ENCODE measurements at regions of chr1 and their contacts with region 1.

Region 1: GRCh38 chr1:15538770-15539169 is 12.1 kb downstream of the DNAJC16 start:
- DNase-seq: no peak
- H3K4me3 ChIP-seq: no peak overlapping the region
- H3K27ac ChIP-seq: no peak overlapping the region
- H3K4me1 ChIP-seq: no peaks in the 10 kb centered on the region
- H3K27me3 ChIP-seq: no peaks in the 10 kb centered on the region
- CTCF ChIP-seq: no peak
- EP300 ChIP-seq: no peak
- POLR2A ChIP-seq: no peak

Region 2: DNA sequence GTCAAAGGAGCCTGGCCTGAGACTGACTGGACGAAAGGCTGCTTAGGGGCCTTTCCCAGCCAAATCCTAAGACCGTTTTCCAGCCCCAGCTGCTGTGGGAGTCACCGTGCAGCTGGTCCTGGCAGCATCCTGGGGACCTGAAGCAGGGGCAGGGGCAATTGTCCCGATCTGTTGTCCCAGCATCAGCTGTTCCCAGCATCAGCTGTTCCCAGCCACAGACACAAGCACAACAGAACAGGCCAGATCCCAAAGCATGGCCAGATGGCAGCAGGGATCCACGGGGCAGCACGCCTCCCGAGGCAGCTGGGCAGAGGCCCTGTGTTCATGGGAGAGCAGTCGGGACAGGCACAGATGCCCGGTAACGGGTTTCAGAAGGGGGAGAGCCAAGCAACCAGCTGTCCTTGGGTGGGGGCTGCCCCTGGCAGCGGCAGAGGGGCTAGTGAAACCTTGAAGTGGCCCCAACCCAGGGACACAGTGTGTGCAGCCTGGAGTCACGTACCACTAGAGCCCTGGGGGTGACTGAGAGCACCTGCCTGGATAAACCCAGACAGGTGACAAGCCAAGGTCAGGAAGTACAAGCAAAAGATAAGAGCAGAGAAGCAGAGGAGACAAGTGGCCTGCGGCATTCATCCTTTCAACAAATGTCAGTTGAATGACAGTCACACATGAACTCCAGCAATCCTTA is 49.6 kb before region 1 on chr1:
- intact Hi-C with region 1: no loop called
- DNase-seq: no peak
- H3K4me3 ChIP-seq: no peak overlapping the region
- H3K27ac ChIP-seq: no peak overlapping the region
- H3K4me1 ChIP-seq: no peaks in the 10 kb centered on the region
- H3K27me3 ChIP-seq: no peaks in the 10 kb centered on the region
- CTCF ChIP-seq: no peak
- EP300 ChIP-seq: no peak
- POLR2A ChIP-seq: no peak

Region 3: DNA sequence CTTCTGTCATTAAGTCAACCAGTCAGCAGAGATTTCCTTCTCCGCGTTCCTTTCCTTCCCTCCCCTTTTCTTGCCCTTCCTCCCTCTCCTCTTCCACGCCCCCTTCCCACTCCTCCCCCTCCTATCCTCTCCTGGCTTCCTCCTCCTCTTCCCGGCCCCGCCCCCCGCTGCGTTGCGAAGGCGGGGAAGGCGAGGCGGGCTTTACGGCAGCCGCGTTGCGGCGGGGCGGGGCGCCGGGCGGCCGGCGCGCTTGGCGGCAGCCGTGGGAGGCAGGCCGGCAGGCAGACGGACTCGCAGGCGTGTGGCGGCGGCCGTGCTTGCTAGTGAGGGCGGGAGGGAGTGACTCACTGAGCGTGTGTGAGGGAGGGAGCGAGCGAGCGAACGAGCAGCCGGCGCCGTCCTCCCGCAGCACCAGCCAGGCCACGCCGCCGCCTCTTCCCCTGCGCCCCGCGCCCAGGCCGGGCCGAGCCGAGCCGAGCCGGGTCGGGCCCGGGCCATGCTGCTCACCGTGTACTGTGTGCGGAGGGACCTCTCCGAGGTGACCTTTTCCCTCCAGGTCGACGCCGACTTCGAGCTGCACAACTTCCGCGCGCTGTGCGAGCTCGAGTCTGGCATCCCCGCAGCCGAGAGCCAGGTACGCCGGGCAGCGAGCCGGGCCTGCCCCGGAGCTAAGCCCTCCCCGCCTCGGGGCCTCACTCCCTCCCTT is 78.6 kb after region 1 on chr1 and contains the start of gene DDI2:
- intact Hi-C with region 1: loop called in 1 of 4 experiments (anchors 10 kb)
- DNase-seq: peak; percentile 97 to 98 (median 97)
- H3K4me3 ChIP-seq: peak within 1 kb of the TSS; percentile 98
- H3K27ac ChIP-seq: peak within 1 kb of the TSS; percentile 88
- H3K4me1 ChIP-seq: peaks cover 8% of the 10 kb centered on the region
- H3K27me3 ChIP-seq: no peaks in the 10 kb centered on the region
- CTCF ChIP-seq: no peak
- EP300 ChIP-seq: no peak
- POLR2A ChIP-seq: peak; percentile 82
- total RNA-seq, gene DDI2: 18.7 to 30.9 (median 23.1) TPM

Measured in ovary (tissue), 10 donors.